WTC11 (cell line): ENCODE measurements at regions of chr15 and their contacts with region 1.

Region 1: DNA sequence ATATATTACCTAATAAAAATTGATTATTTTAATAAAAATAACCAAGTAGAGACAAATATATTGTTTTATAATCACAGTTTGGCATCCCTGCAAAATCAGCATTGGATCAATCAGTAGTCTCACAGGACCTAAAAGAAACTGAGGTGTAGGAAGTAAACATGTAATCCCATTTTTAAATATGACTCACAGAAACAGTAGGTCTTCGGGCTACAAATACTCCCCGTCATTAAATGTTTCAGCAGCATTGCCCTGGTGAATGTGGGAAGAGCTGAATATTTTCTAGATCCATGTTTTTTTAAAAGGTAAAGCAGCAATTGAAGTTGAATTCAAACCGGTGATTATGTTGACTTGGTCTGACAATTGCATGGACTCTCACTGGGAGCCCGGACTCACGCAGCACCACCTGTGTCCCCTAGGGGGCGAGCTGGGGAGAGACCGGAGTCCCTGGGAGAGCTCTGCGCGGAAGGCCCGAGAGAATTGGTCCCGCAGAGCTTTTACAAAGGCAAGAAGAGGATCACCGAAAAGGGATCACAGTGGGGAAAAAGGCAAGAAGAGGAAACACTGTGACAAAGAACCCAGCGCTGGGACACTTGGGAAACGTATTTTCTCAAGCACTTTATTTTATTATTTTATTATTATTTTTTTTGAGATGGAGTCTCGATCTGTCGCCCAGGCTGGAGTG is 17.2 kb upstream of the USP3 start:
- DNase-seq: peak; percentile 95
- ATAC-seq: peak; percentile 94
- H3K4me3 Mint-ChIP-seq: no peak overlapping the region
- H3K27ac Mint-ChIP-seq: no peak overlapping the region
- H3K4me1 Mint-ChIP-seq: peaks cover 37% of the 10 kb centered on the region
- H3K27me3 Mint-ChIP-seq: peaks cover 17% of the 10 kb centered on the region
- CTCF ChIP-seq: peak; percentile 85

Region 2: GRCh38 chr15:63136742-63137141 is 350.5 kb before region 1 on chr15:
- CTCF ChIA-PET with region 1: no interaction called
- POLR2A ChIA-PET with region 1: no interaction called
- DNase-seq: no peak
- ATAC-seq: no peak
- H3K4me3 Mint-ChIP-seq: no peak overlapping the region
- H3K27ac Mint-ChIP-seq: no peak overlapping the region
- H3K4me1 Mint-ChIP-seq: no peaks in the 10 kb centered on the region
- H3K27me3 Mint-ChIP-seq: no peaks in the 10 kb centered on the region
- CTCF ChIP-seq: no peak

Region 3: GRCh38 chr15:63354821-63355650 is 132.2 kb before region 1 on chr15:
- CTCF ChIA-PET with region 1: no interaction called
- POLR2A ChIA-PET with region 1: no interaction called
- DNase-seq: no peak
- ATAC-seq: no peak
- H3K4me3 Mint-ChIP-seq: no peak overlapping the region
- H3K27ac Mint-ChIP-seq: no peak overlapping the region
- H3K4me1 Mint-ChIP-seq: peaks cover 9% of the 10 kb centered on the region; the same call in 1 of the 2 replicates
- H3K27me3 Mint-ChIP-seq: peaks cover 3% of the 10 kb centered on the region; the same call in 1 of the 2 replicates
- CTCF ChIP-seq: no peak

Region 4: GRCh38 chr15:63473999-63474809 is 13.0 kb before region 1 on chr15:
- CTCF ChIA-PET with region 1: interaction called, 26 read pairs
- POLR2A ChIA-PET with region 1: no interaction called
- DNase-seq: peak; percentile 55
- ATAC-seq: peak; percentile 89
- H3K4me3 Mint-ChIP-seq: no peak overlapping the region
- H3K27ac Mint-ChIP-seq: no peak overlapping the region
- H3K4me1 Mint-ChIP-seq: peaks cover 15% of the 10 kb centered on the region
- H3K27me3 Mint-ChIP-seq: 0 out of 2 replicates have a peak, but pooled peaks cover 2% of the 10 kb centered on the region
- CTCF ChIP-seq: no peak

Region 5: GRCh38 chr15:63504247-63504978 is 17.2 kb after region 1 on chr15 and contains the start of gene USP3:
- CTCF ChIA-PET with region 1: interaction called, 54 read pairs
- POLR2A ChIA-PET with region 1: no interaction called
- DNase-seq: peak; percentile 92
- ATAC-seq: peak; percentile 68
- H3K4me3 Mint-ChIP-seq: peak within 1 kb of the TSS; percentile 76
- H3K27ac Mint-ChIP-seq: no peak within 1 kb of the TSS
- H3K4me1 Mint-ChIP-seq: peaks cover 76% of the 10 kb centered on the region
- H3K27me3 Mint-ChIP-seq: peaks cover 36% of the 10 kb centered on the region
- CTCF ChIP-seq: no peak
- total RNA-seq, gene USP3: 30.0 to 36.6 TPM (median 30.8 TPM) in 3 replicates

Region 6: DNA sequence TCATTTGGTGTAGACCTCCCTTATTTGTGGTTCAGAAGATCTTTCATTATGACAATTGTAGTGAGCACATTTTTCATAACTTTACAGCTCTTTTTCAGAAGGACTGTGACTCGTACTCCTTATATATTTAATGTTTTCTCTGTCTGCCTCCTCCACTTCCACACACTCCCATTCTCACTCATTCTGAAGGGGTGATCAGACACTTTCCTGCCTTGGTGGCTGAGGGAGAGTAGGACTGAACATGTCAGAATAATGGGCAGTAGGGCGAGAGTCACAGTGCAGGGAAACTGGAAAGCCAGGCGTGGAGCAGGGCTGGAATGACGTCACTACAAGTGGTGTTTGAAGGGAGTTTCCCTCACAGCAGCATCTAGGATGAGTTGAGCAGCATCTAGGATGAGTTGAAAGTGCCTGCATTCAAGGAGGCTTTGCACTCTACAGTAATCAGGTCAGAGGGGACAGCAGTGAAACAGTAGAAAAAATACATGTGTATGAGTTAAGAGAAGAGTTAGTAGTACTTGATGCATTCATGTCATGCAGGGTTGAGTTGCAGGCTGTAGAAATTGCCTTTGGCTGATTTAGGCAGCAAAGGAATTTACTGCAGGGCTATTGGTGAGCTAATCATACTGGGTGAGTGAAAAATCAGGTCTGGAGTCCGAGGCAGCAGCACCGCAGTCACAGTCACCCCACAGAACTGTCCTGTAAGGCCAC is 73.7 kb after region 1 on chr15:
- CTCF ChIA-PET with region 1: no interaction called
- POLR2A ChIA-PET with region 1: no interaction called
- DNase-seq: no peak
- ATAC-seq: peak; percentile 40
- H3K4me3 Mint-ChIP-seq: no peak overlapping the region
- H3K27ac Mint-ChIP-seq: no peak overlapping the region
- H3K4me1 Mint-ChIP-seq: peaks cover 48% of the 10 kb centered on the region
- H3K27me3 Mint-ChIP-seq: no peaks in the 10 kb centered on the region
- CTCF ChIP-seq: no peak

Region 7: DNA sequence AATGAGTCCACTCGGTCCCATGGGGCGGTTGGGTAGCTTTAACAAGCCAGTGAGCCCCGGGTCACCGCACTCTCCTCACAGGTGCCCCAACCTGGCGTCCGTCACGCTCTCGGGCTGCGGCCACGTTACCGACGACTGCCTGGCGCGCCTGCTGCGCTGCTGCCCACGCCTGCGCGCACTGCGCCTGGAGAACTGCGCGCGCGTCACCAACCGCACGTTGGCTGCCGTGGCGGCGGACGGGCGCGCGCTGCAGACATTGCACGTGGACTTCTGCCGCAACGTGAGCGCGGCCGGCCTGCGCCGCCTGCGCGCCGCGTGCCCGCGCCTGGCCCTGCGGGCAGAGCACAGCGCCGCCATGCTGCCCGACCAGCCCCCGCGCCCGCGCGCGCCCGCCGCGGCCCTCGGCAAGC is 113.4 kb after region 1 on chr15:
- CTCF ChIA-PET with region 1: interaction called, 23 read pairs
- POLR2A ChIA-PET with region 1: no interaction called
- DNase-seq: peak; percentile 67
- ATAC-seq: peak; percentile 60
- H3K4me3 Mint-ChIP-seq: peak overlapping the region; percentile 83
- H3K27ac Mint-ChIP-seq: no peak overlapping the region
- H3K4me1 Mint-ChIP-seq: peaks cover 21% of the 10 kb centered on the region
- H3K27me3 Mint-ChIP-seq: peaks cover 28% of the 10 kb centered on the region
- CTCF ChIP-seq: no peak

Region 8: GRCh38 chr15:63610200-63610841 is 123.1 kb after region 1 on chr15:
- CTCF ChIA-PET with region 1: interaction called, 10 read pairs
- POLR2A ChIA-PET with region 1: no interaction called
- DNase-seq: peak; percentile 78
- ATAC-seq: peak; percentile 95
- H3K4me3 Mint-ChIP-seq: no peak overlapping the region
- H3K27ac Mint-ChIP-seq: peak overlapping the region; percentile 31; the same call in 1 of the 2 replicates
- H3K4me1 Mint-ChIP-seq: 0 out of 2 replicates have a peak, but pooled peaks cover 4% of the 10 kb centered on the region
- H3K27me3 Mint-ChIP-seq: no peaks in the 10 kb centered on the region
- CTCF ChIP-seq: peak; percentile 56